Activated CD4-positive, alpha-beta memory T cell treated with anti-CD3 and anti-CD28 coated beads, Interleukin-2, amount 10 ng/mL, durations not matched to agents 7 days and 5 days (primary cell): ENCODE measurements at regions of chr17 and their contacts with region 1.

Region 1: GRCh38 chr17:42577532-42578281 is at the start of gene PSMC3IP:
- DNase-seq: peak; percentile 95
- H3K4me3 Mint-ChIP-seq: peak within 1 kb of the TSS; percentile 96
- H3K27ac Mint-ChIP-seq: peak within 1 kb of the TSS; percentile 88
- H3K4me1 Mint-ChIP-seq: peaks cover 48% of the 10 kb centered on the region
- H3K27me3 Mint-ChIP-seq: no peaks in the 10 kb centered on the region
- total RNA-seq, gene PSMC3IP: 14.7 to 16.1 TPM

Region 2: GRCh38 chr17:42517516-42517915 is 60.2 kb before region 1 on chr17:
- CTCF ChIA-PET with region 1: no interaction called
- POLR2A ChIA-PET with region 1: no interaction called
- DNase-seq: peak; percentile 84
- H3K4me3 Mint-ChIP-seq: no peak overlapping the region
- H3K27ac Mint-ChIP-seq: peak overlapping the region; percentile 26
- H3K4me1 Mint-ChIP-seq: peaks cover 1% of the 10 kb centered on the region
- H3K27me3 Mint-ChIP-seq: peaks cover 26% of the 10 kb centered on the region

Region 3: DNA sequence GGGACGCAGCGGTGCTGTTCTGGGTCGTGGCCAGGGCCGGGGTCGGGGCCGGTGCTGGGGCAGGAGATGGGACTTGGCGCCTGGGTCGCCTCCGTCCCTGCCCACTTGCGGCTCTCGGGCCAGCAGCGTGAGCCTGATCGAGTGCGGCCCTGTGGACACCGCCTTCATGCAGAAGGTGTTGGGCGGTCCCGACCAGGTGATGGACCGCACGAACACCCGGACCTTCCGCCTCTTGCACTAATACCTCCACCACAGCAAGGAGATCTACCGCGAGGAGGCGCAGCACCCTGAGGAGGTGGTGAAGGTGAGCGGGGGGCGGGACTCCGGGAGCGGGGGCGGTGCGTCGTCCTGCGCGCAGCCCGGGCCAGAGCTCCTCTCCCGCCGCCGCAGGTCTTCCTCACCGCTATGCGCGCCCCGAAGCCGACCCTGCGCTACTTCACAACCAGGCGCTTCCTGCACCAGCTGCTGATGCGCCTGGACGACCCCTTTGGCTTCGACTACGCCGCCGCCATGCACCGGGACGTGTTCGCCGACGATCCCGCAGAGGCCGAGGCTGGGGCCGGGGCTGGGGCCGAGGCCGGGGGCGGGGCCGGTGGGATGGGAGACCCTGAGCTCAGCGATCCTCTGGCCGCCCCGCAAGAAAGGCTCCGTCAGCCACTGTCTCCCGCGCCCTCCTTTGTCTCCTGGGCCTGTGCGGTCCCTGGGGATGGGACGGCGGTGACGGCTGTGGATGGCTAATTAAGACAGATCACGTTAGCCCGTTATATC is 29.5 kb before region 1 on chr17:
- CTCF ChIA-PET with region 1: interaction called, 12 read pairs
- POLR2A ChIA-PET with region 1: no interaction called
- DNase-seq: peak; percentile 80
- H3K4me3 Mint-ChIP-seq: no peak overlapping the region
- H3K27ac Mint-ChIP-seq: no peak overlapping the region
- H3K4me1 Mint-ChIP-seq: peaks cover 10% of the 10 kb centered on the region
- H3K27me3 Mint-ChIP-seq: no peaks in the 10 kb centered on the region

Region 4: GRCh38 chr17:42566883-42567573 is 10.7 kb before region 1 on chr17 and contains the start of gene MLX:
- CTCF ChIA-PET with region 1: interaction called, 37 read pairs
- POLR2A ChIA-PET with region 1: interaction called, 109 read pairs
- DNase-seq: peak; percentile 93
- H3K4me3 Mint-ChIP-seq: peak within 1 kb of the TSS; percentile 92
- H3K27ac Mint-ChIP-seq: peak within 1 kb of the TSS; percentile 93
- H3K4me1 Mint-ChIP-seq: peaks cover 59% of the 10 kb centered on the region
- H3K27me3 Mint-ChIP-seq: no peaks in the 10 kb centered on the region
- total RNA-seq, gene MLX: 52.2 to 53.8 TPM

Region 5: DNA sequence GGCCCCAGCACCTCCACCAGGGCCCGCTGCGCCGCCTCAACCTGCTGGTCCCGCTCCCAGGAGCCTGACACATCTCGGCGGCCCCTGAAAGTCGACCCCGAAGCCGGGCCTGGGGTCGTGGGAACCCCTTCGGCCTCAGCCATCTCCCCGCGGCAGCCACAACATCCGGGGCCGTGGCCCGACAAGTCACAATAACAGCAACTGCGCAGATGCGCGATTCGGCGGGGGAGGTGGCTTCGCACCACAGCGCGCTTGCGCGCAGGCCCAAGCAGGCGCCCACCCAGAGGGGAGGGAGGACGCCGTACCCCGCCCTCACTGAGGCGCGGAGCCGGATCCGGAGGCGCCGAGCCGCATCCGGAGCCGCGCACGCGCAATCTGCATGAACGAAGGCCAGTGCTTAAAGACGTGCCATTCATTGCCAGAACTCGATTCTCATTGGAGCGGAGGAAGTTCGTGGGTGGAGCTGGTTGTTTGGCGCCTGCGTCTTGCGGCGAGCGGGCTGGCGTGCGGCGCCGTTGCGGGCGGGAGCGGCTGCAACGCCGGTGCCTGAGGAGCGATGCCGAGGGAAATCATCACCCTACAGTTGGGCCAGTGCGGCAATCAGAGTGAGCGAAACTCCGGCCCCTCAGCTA is 31.6 kb after region 1 on chr17 and contains the starts of genes RETREG3 and TUBG1:
- CTCF ChIA-PET with region 1: interaction called, 70 read pairs
- POLR2A ChIA-PET with region 1: interaction called, 41 read pairs
- DNase-seq: peak; percentile 99
- H3K4me3 Mint-ChIP-seq: peak within 1 kb of the TSS; percentile 99
- H3K27ac Mint-ChIP-seq: peak within 1 kb of the TSS; percentile 91
- H3K4me1 Mint-ChIP-seq: peaks cover 42% of the 10 kb centered on the region
- H3K27me3 Mint-ChIP-seq: no peaks in the 10 kb centered on the region
- total RNA-seq, gene RETREG3: 73.9 to 75.5 TPM
- total RNA-seq, gene TUBG1: 53.3 to 56.3 TPM

Region 6: GRCh38 chr17:42642336-42642735 is 64.6 kb after region 1 on chr17:
- CTCF ChIA-PET with region 1: no interaction called
- POLR2A ChIA-PET with region 1: no interaction called
- DNase-seq: no peak
- H3K4me3 Mint-ChIP-seq: no peak overlapping the region
- H3K27ac Mint-ChIP-seq: no peak overlapping the region
- H3K4me1 Mint-ChIP-seq: no peaks in the 10 kb centered on the region
- H3K27me3 Mint-ChIP-seq: peaks cover 10% of the 10 kb centered on the region

Region 7: GRCh38 chr17:42760652-42761581 is 183.2 kb after region 1 on chr17 and contains the start of gene RAMP2:
- CTCF ChIA-PET with region 1: interaction called, 93 read pairs
- POLR2A ChIA-PET with region 1: interaction called, 7 read pairs
- DNase-seq: no peak
- H3K4me3 Mint-ChIP-seq: no peak within 1 kb of the TSS
- H3K27ac Mint-ChIP-seq: no peak within 1 kb of the TSS
- H3K4me1 Mint-ChIP-seq: peaks cover 7% of the 10 kb centered on the region
- H3K27me3 Mint-ChIP-seq: peaks cover 62% of the 10 kb centered on the region
- total RNA-seq, gene RAMP2: not detected

Region 8: GRCh38 chr17:42773290-42774035 is 195.8 kb after region 1 on chr17 and contains the start of gene VPS25:
- CTCF ChIA-PET with region 1: interaction called, 37 read pairs
- POLR2A ChIA-PET with region 1: interaction called, 18 read pairs
- DNase-seq: peak; percentile 79
- H3K4me3 Mint-ChIP-seq: peak within 1 kb of the TSS; percentile 99
- H3K27ac Mint-ChIP-seq: peak within 1 kb of the TSS; percentile 89
- H3K4me1 Mint-ChIP-seq: peaks cover 38% of the 10 kb centered on the region
- H3K27me3 Mint-ChIP-seq: peaks cover 2% of the 10 kb centered on the region
- total RNA-seq, gene VPS25: 52.8 to 53.0 TPM